HepG2 (cell line): ENCODE measurements at regions of chr19 and their contacts with region 1.

Region 1: GRCh38 chr19:2236314-2237050 is at the starts of genes PLEKHJ1 and SF3A2:
- DNase-seq: peak; percentile 96
- ATAC-seq: peak; percentile 60
- H3K4me3 ChIP-seq: peak within 1 kb of the TSS; percentile 83 to 92 (median 87)
- H3K27ac ChIP-seq: peak within 1 kb of the TSS; percentile 97
- H3K4me1 ChIP-seq: peaks cover 75% of the 10 kb centered on the region
- H3K27me3 ChIP-seq: no peaks in the 10 kb centered on the region
- CTCF ChIP-seq: peak; percentile 99
- EP300 ChIP-seq: no peak; a peak in 1 of 4 replicates
- POLR2A ChIP-seq: peak; percentile 67 to 70
- RAD21 ChIP-seq: peak; percentile 99
- total RNA-seq, gene PLEKHJ1: 108 and 130 TPM in 2 replicates
- total RNA-seq, gene SF3A2: 8.8 and 10.1 TPM in 2 replicates

Region 2: GRCh38 chr19:2151339-2152229 is 84.9 kb before region 1 on chr19 and contains the start of gene AP3D1:
- CTCF ChIA-PET with region 1: no interaction called
- POLR2A ChIA-PET with region 1: interaction called, 11 read pairs
- in situ Hi-C with region 1: no loop called
- intact Hi-C with region 1: loop called (anchors 10 kb)
- DNase-seq: peak; percentile 98
- ATAC-seq: peak; percentile 86
- H3K4me3 ChIP-seq: peak within 1 kb of the TSS; percentile 85 to 100 (median 97)
- H3K27ac ChIP-seq: peak within 1 kb of the TSS; percentile 76
- H3K4me1 ChIP-seq: peaks cover 60% of the 10 kb centered on the region
- H3K27me3 ChIP-seq: no peaks in the 10 kb centered on the region; a peak in 1 of 5 replicates
- CTCF ChIP-seq: peak; percentile 12; the same call in 1 of the 2 replicates
- EP300 ChIP-seq: no peak; a peak in 1 of 4 replicates
- POLR2A ChIP-seq: peak; percentile 25 to 52; a peak in 1 of 4 replicates
- RAD21 ChIP-seq: no peak; the same call in none of the 2 replicates
- total RNA-seq, gene AP3D1: 73.5 and 82.6 TPM in 2 replicates

Region 3: DNA sequence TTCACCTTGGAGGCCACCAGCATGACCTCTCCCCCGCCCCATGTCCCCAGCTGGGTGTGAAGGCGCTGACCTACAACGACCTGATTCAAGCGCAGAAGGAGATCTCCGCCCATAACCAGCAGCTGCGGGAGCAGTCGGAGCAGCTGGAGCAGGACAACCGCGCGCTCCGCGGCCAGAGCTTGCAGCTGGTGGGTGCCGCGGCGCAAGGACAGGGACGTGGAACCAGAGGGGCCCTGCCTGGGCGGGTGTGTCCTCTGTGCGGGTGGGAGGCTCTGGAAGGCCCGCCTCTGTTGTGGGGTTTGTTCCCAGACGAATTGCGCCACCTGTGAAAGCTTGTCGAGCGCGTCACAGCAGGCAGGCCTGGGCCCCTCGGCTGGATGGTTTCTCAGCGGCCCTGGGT is 22.7 kb before region 1 on chr19:
- CTCF ChIA-PET with region 1: no interaction called
- POLR2A ChIA-PET with region 1: interaction called, 10 read pairs
- in situ Hi-C with region 1: no loop called
- intact Hi-C with region 1: no loop called
- DNase-seq: no peak
- ATAC-seq: no peak
- H3K4me3 ChIP-seq: no peak overlapping the region
- H3K27ac ChIP-seq: peak overlapping the region; percentile 77
- H3K4me1 ChIP-seq: peaks cover 27% of the 10 kb centered on the region
- H3K27me3 ChIP-seq: no peaks in the 10 kb centered on the region
- CTCF ChIP-seq: no peak
- EP300 ChIP-seq: no peak
- POLR2A ChIP-seq: no peak
- RAD21 ChIP-seq: no peak

Region 4: DNA sequence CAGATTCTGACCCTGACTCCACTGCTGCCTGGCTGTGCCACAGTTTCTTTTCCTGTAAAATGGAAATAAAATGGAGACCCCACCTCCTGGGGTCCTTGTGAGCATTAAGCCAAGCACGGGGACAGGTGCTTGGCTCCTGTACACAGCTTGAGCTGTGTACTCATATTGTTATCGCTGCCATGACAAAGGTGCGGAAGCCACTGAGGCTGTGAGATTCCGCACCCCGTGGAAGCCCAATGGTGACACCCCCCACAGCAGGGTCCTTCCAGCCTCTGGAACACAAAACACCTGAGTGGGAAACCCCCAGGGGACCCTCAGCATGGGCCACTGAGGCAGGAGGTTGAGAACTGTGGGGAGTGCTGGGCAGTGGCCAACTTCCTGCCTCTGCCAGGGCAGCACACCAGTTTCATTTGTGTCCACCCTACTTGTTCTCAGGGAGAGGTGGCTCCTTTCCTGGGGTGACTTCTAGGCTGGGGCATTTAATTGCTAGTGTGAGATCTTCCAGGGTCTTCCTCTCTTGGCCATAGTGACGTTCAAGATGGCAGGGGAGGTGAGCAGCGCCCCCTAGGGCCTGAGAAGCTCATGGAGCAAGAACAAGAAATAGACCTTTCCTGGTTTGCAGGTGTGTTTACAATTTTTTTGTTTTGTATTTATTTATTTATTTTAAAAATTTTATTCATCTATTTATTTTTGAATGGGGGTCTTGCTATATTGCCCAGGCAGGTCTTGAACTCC is 25.1 kb after region 1 on chr19:
- CTCF ChIA-PET with region 1: interaction called, 3 read pairs
- POLR2A ChIA-PET with region 1: interaction called, 35 read pairs
- in situ Hi-C with region 1: no loop called
- intact Hi-C with region 1: no loop called
- DNase-seq: no peak
- ATAC-seq: no peak
- H3K4me3 ChIP-seq: no peak overlapping the region
- H3K27ac ChIP-seq: no peak overlapping the region
- H3K4me1 ChIP-seq: peaks cover 57% of the 10 kb centered on the region
- H3K27me3 ChIP-seq: peaks cover 3 to 5% of the 10 kb centered on the region in 2 experiments; a peak in 2 of 5 replicates
- CTCF ChIP-seq: peak; percentile 60
- EP300 ChIP-seq: no peak
- POLR2A ChIP-seq: no peak
- RAD21 ChIP-seq: no peak

Region 5: DNA sequence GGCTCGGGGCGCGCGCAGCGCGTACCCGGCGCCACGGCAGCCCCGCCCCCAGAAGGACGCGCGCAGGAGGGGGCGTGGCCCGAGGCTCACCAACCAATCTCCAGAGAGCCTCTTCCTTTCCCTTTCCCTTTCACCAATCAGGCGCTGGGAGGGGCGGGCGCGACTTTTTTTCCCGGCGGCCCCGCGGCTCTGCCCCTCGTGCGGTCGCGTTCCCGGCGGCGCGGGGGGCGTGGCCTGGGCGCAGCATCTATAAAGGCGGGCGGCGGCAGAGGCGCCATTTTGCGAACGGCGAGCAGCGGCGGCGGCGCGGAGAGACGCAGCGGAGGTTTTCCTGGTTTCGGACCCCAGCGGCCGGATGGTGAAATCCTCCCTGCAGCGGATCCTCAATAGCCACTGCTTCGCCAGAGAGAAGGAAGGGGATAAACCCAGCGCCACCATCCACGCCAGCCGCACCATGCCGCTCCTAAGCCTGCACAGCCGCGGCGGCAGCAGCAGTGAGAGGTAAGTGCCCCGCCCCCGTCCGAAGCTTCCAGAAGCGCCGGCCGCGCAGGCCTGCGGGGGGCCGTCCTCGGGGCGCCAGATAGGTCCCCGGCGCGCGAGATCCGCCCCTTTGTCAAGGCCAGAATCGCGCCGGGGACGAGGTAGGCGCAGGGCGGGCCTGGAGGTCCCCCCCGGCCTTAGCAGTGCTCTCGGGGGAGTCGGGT is 32.9 kb after region 1 on chr19:
- CTCF ChIA-PET with region 1: interaction called, 17 read pairs
- POLR2A ChIA-PET with region 1: interaction called, 11 read pairs
- in situ Hi-C with region 1: no loop called
- intact Hi-C with region 1: loop called (anchors 5 kb)
- DNase-seq: peak; percentile 91
- ATAC-seq: peak; percentile 37
- H3K4me3 ChIP-seq: peak overlapping the region; percentile 93 to 99 (median 96)
- H3K27ac ChIP-seq: peak overlapping the region; percentile 87
- H3K4me1 ChIP-seq: peaks cover 66% of the 10 kb centered on the region
- H3K27me3 ChIP-seq: no peaks in the 10 kb centered on the region; a peak in 1 of 5 replicates
- CTCF ChIP-seq: no peak
- EP300 ChIP-seq: no peak
- POLR2A ChIP-seq: peak; percentile 98
- RAD21 ChIP-seq: peak; percentile 68; the same call in 1 of the 2 replicates

Region 6: GRCh38 chr19:2315818-2316353 is 79.4 kb after region 1 on chr19:
- CTCF ChIA-PET with region 1: interaction called, 10 read pairs
- POLR2A ChIA-PET with region 1: interaction called, 11 read pairs
- in situ Hi-C with region 1: loop called (anchors 10 kb)
- intact Hi-C with region 1: loop called (anchors 10 kb)
- DNase-seq: peak; percentile 55
- ATAC-seq: peak; percentile 92
- H3K4me3 ChIP-seq: peak overlapping the region in 2 of 3 experiments; percentile 4 to 61; a peak in 4 of 6 replicates
- H3K27ac ChIP-seq: no peak overlapping the region
- H3K4me1 ChIP-seq: peaks cover 30% of the 10 kb centered on the region
- H3K27me3 ChIP-seq: peaks cover 5 to 7% of the 10 kb centered on the region in 2 experiments; a peak in 4 of 5 replicates
- CTCF ChIP-seq: peak; percentile 98
- EP300 ChIP-seq: no peak
- POLR2A ChIP-seq: no peak
- RAD21 ChIP-seq: peak; percentile 96